CD4-positive, alpha-beta T cell (primary cell): ENCODE measurements at regions of chr5 and their contacts with region 1.

Region 1: GRCh38 chr5:75265731-75266130 is 29.1 kb upstream of the ANKRD31 start:
- DNase-seq: peak in 3 of 14 experiments; percentile 57 to 68 (median 65)
- ATAC-seq: peak; percentile 74
- H3K4me3 ChIP-seq: no peak overlapping the region
- H3K4me3 Mint-ChIP-seq: no peak overlapping the region
- H3K27ac ChIP-seq: no peak overlapping the region
- H3K27ac Mint-ChIP-seq: no peak overlapping the region
- H3K4me1 ChIP-seq: no peaks in the 10 kb centered on the region
- H3K4me1 Mint-ChIP-seq: no peaks in the 10 kb centered on the region
- H3K27me3 ChIP-seq: no peaks in the 10 kb centered on the region
- H3K27me3 Mint-ChIP-seq: peaks cover 11% of the 10 kb centered on the region
- CTCF ChIP-seq: peak; percentile 78

Region 2: GRCh38 chr5:74673011-74673790 is 592.5 kb before region 1 on chr5:
- CTCF ChIA-PET with region 1: no interaction called
- POLR2A ChIA-PET with region 1: no interaction called
- intact Hi-C with region 1: loop called (anchors 5 to 10 kb)
- DNase-seq: peak in 3 of 14 experiments; percentile 39 to 40 (median 39)
- ATAC-seq: no peak
- H3K4me3 ChIP-seq: no peak overlapping the region
- H3K4me3 Mint-ChIP-seq: no peak overlapping the region
- H3K27ac ChIP-seq: no peak overlapping the region
- H3K27ac Mint-ChIP-seq: no peak overlapping the region
- H3K4me1 ChIP-seq: no peaks in the 10 kb centered on the region
- H3K4me1 Mint-ChIP-seq: no peaks in the 10 kb centered on the region
- H3K27me3 ChIP-seq: no peaks in the 10 kb centered on the region
- H3K27me3 Mint-ChIP-seq: peaks cover 9% of the 10 kb centered on the region
- CTCF ChIP-seq: peak; percentile 35

Region 3: DNA sequence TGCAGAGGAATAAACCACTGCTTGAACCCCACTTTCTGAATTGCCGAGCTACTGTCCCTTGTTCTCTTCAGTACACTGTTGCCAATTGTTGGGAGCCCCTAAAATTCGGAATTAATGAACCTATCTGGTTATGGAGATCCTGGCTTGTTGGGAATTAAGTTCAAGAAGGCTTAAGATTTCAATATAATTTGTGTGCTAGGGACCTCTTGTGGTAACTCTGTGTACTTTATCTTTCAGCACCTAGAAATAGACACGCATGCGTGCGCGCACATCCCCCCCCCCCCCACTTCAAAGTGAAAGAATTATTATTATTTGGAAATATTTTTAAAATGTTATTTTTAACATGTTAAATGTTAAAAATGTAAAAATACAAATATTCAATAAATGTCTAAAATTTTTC is 346.2 kb before region 1 on chr5:
- CTCF ChIA-PET with region 1: no interaction called
- POLR2A ChIA-PET with region 1: no interaction called
- intact Hi-C with region 1: loop called in 1 of 2 experiments (anchors 2 kb)
- DNase-seq: peak in 4 of 14 experiments; percentile 35 to 69 (median 61)
- ATAC-seq: peak; percentile 69
- H3K4me3 ChIP-seq: no peak overlapping the region
- H3K4me3 Mint-ChIP-seq: no peak overlapping the region
- H3K27ac ChIP-seq: no peak overlapping the region
- H3K27ac Mint-ChIP-seq: no peak overlapping the region
- H3K4me1 ChIP-seq: no peaks in the 10 kb centered on the region
- H3K4me1 Mint-ChIP-seq: no peaks in the 10 kb centered on the region
- H3K27me3 ChIP-seq: no peaks in the 10 kb centered on the region
- H3K27me3 Mint-ChIP-seq: no peaks in the 10 kb centered on the region
- CTCF ChIP-seq: peak; percentile 62

Region 4: GRCh38 chr5:74927336-74927735 is 338.4 kb before region 1 on chr5:
- CTCF ChIA-PET with region 1: interaction called, 4 read pairs
- POLR2A ChIA-PET with region 1: interaction called, 3 read pairs
- intact Hi-C with region 1: loop called (anchors 1 to 2 kb)
- DNase-seq: no peak
- ATAC-seq: no peak
- H3K4me3 ChIP-seq: no peak overlapping the region
- H3K4me3 Mint-ChIP-seq: no peak overlapping the region
- H3K27ac ChIP-seq: no peak overlapping the region
- H3K27ac Mint-ChIP-seq: no peak overlapping the region
- H3K4me1 ChIP-seq: no peaks in the 10 kb centered on the region
- H3K4me1 Mint-ChIP-seq: no peaks in the 10 kb centered on the region
- H3K27me3 ChIP-seq: no peaks in the 10 kb centered on the region
- H3K27me3 Mint-ChIP-seq: no peaks in the 10 kb centered on the region
- CTCF ChIP-seq: no peak